ENCODE measurements at regions of chr20 and their contacts with region 1.

Region 1: GRCh38 chr20:54093423-54094267 is 23.3 kb upstream of the BCAS1 start:
- DNase-seq: no peak
- ATAC-seq: no peak
- H3K4me3 ChIP-seq: no peak overlapping the region
- H3K27ac ChIP-seq: no peak overlapping the region
- H3K4me1 ChIP-seq: no peaks in the 10 kb centered on the region
- H3K27me3 ChIP-seq: no peaks in the 10 kb centered on the region
- CTCF ChIP-seq: no peak
- POLR2A ChIP-seq: no peak

Region 2: DNA sequence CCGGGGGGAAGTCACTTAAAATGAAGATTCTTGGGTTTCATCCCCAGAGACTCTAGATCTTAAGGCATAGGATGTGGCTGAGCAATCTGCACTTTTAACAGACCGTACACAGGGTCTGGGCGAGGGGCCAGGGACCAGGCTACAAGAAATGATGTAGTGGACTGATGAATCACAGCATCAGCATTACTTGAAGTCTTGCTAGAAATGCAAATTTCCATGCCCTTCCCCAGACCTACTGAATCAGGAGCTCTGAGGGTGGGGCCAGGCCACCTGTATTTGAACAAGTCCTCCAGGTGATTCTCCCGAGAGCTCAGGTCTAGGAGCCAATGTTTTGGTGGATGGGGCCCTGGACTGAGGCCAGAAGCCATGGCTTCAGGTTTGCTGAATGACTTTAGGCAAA is 550.1 kb after region 1 on chr20:
- in situ Hi-C with region 1: loop called in 1 of 4 experiments (anchors 10 kb)
- intact Hi-C with region 1: loop called (anchors 2 kb)
- DNase-seq: no peak
- ATAC-seq: no peak
- H3K4me3 ChIP-seq: no peak overlapping the region
- H3K27ac ChIP-seq: no peak overlapping the region
- H3K4me1 ChIP-seq: no peaks in the 10 kb centered on the region
- H3K27me3 ChIP-seq: no peaks in the 10 kb centered on the region
- CTCF ChIP-seq: no peak
- POLR2A ChIP-seq: no peak

Measured in gastrocnemius medialis (tissue), 4 donors.